ENCODE measurements at regions of chr15 and their contacts with region 1.

Region 1: GRCh38 chr15:50260969-50261496 is 4.5 kb downstream of the HDC start:
- DNase-seq: peak; percentile 85 to 90 (median 88)
- ATAC-seq: peak; percentile 85
- H3K4me3 ChIP-seq: no peak overlapping the region
- H3K27ac ChIP-seq: peak overlapping the region; percentile 85
- H3K4me1 ChIP-seq: peaks cover 58 to 59% of the 10 kb centered on the region in 2 experiments
- H3K27me3 ChIP-seq: no peaks in the 10 kb centered on the region
- CTCF ChIP-seq: 0 out of 6 replicates have a peak, but pooled peaks of 1 of the 3 experiments have one; percentile 3
- EP300 ChIP-seq: peak; percentile 99
- POLR2A ChIP-seq: no peak
- RAD21 ChIP-seq: no peak; a peak in 2 of 4 replicates

Region 2: GRCh38 chr15:50182219-50183013 is 78.6 kb before region 1 on chr15:
- CTCF ChIA-PET with region 1: no interaction called
- POLR2A ChIA-PET with region 1: interaction called, 8 read pairs
- in situ Hi-C with region 1: no loop called
- intact Hi-C with region 1: loop called (anchors 2 kb)
- DNase-seq: peak in 3 of 4 experiments; percentile 40 to 50 (median 46)
- ATAC-seq: peak; percentile 80
- H3K4me3 ChIP-seq: peak overlapping the region; percentile 65
- H3K27ac ChIP-seq: peak overlapping the region; percentile 38; the same call in 1 of the 3 replicates
- H3K4me1 ChIP-seq: peaks cover 16 to 21% of the 10 kb centered on the region in 2 experiments; a peak in 4 of 5 replicates
- H3K27me3 ChIP-seq: no peaks in the 10 kb centered on the region
- CTCF ChIP-seq: no peak
- EP300 ChIP-seq: no peak
- POLR2A ChIP-seq: no peak
- RAD21 ChIP-seq: no peak

Region 3: DNA sequence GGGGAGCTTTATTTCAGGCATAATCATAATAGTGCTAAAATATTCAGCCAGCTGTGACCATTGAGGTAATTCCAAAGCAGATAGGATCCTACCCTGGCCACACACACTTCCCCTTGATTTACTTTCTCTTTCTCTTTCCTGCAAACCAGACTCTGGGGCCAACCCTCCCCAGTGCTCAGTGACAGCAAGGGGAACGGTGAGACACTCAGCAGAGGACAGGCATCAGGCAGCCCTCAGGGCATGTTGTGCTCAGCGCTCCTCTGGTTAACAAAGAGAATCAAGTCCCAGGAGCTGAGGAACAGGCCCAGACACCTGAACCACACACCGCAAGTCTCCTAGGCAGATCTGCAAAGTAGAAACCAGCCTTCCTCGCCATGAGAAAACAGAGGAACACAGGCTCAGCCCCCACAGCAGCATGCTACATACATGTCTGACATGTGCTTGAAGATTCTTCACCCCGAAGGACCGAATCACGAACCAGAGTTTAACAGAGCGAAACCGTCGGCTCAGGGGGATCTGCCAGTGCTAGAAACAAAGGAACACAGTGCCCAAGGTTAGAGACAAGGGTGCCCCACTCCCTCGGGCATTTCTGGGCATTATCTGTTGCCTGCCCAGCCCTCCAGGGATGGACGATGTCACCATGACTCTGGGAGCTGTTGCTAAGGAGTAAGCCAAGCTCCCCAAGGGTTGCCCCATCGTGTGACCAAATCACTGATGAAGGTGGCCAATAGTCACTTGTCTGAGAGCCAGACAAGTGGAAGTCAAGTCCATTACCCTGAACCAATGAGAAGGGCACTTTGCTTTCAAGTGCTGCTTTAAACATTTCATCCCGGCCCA is 13.0 kb before region 1 on chr15:
- CTCF ChIA-PET with region 1: no interaction called
- POLR2A ChIA-PET with region 1: interaction called, 28 read pairs
- in situ Hi-C with region 1: no loop called
- intact Hi-C with region 1: no loop called
- DNase-seq: peak in 1 of 4 experiments; percentile 23
- ATAC-seq: peak; percentile 75
- H3K4me3 ChIP-seq: no peak overlapping the region
- H3K27ac ChIP-seq: no peak overlapping the region
- H3K4me1 ChIP-seq: peaks cover 14 to 22% of the 10 kb centered on the region in 2 experiments
- H3K27me3 ChIP-seq: no peaks in the 10 kb centered on the region
- CTCF ChIP-seq: no peak
- EP300 ChIP-seq: no peak
- POLR2A ChIP-seq: no peak
- RAD21 ChIP-seq: no peak

Region 4: GRCh38 chr15:50287324-50288116 is 26.5 kb after region 1 on chr15:
- CTCF ChIA-PET with region 1: no interaction called
- POLR2A ChIA-PET with region 1: interaction called, 7 read pairs
- in situ Hi-C with region 1: no loop called
- intact Hi-C with region 1: loop called (anchors 2 kb)
- DNase-seq: peak in 3 of 4 experiments; percentile 21 to 24 (median 21)
- ATAC-seq: peak; percentile 83
- H3K4me3 ChIP-seq: no peak overlapping the region
- H3K27ac ChIP-seq: no peak overlapping the region
- H3K4me1 ChIP-seq: peaks cover 0 to 13% of the 10 kb centered on the region in 2 experiments; a peak in 4 of 5 replicates
- H3K27me3 ChIP-seq: no peaks in the 10 kb centered on the region
- CTCF ChIP-seq: no peak
- EP300 ChIP-seq: 0 out of 2 replicates have a peak, but pooled peaks have one; percentile 11
- POLR2A ChIP-seq: no peak
- RAD21 ChIP-seq: no peak

Region 5: GRCh38 chr15:50315814-50316630 is 55.0 kb after region 1 on chr15:
- CTCF ChIA-PET with region 1: no interaction called
- POLR2A ChIA-PET with region 1: no interaction called
- in situ Hi-C with region 1: no loop called
- intact Hi-C with region 1: loop called (anchors 2 kb)
- DNase-seq: peak in 3 of 4 experiments; percentile 16 to 59 (median 19)
- ATAC-seq: peak; percentile 80
- H3K4me3 ChIP-seq: no peak overlapping the region
- H3K27ac ChIP-seq: no peak overlapping the region
- H3K4me1 ChIP-seq: no peaks in the 10 kb centered on the region
- H3K27me3 ChIP-seq: no peaks in the 10 kb centered on the region
- CTCF ChIP-seq: peak; percentile 49 to 78 (median 59); a peak in 5 of 6 replicates
- EP300 ChIP-seq: no peak
- POLR2A ChIP-seq: no peak
- RAD21 ChIP-seq: peak; percentile 91 to 92

Region 6: GRCh38 chr15:50424066-50424890 is 163.2 kb after region 1 on chr15 and contains the start of gene USP8:
- CTCF ChIA-PET with region 1: no interaction called
- POLR2A ChIA-PET with region 1: no interaction called
- in situ Hi-C with region 1: no loop called
- intact Hi-C with region 1: loop called (anchors 5 kb)
- DNase-seq: peak; percentile 92 to 99 (median 94)
- ATAC-seq: peak; percentile 97
- H3K4me3 ChIP-seq: peak within 1 kb of the TSS; percentile 76
- H3K27ac ChIP-seq: peak within 1 kb of the TSS; percentile 90
- H3K4me1 ChIP-seq: peaks cover 4 to 10% of the 10 kb centered on the region in 2 experiments; a peak in 4 of 5 replicates
- H3K27me3 ChIP-seq: no peaks in the 10 kb centered on the region
- CTCF ChIP-seq: no peak
- EP300 ChIP-seq: peak; percentile 7; the same call in 1 of the 2 replicates
- POLR2A ChIP-seq: peak; percentile 95
- RAD21 ChIP-seq: no peak
- polyA plus RNA-seq, gene USP8: 43.9 to 44.8 TPM

Measured in K562 (cell line).